Ascending aorta (tissue), 2 donors: ENCODE measurements at regions of chr1 and their contacts with region 1.

Region 1: DNA sequence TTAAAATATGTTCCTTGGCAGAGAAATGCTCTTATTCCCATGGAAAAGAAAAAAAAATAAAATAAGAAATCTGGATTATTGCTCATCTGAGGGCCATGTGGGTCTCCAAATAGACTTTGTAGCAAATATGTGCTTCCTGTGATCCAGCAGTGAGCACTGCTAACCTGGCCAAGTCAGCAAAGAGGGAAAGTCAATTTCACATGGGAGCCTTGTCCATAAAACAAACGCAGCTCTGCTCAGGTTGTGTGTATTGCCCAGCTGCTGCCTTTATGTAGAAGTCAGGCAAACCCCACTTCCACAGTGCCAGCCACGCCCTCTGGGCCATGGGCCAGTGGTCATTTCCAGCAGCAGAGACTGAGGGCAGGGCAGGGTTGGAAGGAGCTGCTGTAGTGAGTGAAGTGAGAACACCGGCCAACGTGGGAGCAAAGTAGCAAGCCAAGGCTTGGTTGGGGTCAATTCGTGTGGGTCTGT is 174.3 kb downstream of the LYPLAL1 start:
- DNase-seq: peak in 1 of 2 donors; percentile 70
- H3K4me3 ChIP-seq: no peak overlapping the region
- H3K27ac ChIP-seq: peak overlapping the region; percentile 49 to 64
- H3K4me1 ChIP-seq: peaks cover 0 to 12% of the 10 kb centered on the region in 2 donors
- H3K27me3 ChIP-seq: no peaks in the 10 kb centered on the region
- CTCF ChIP-seq: no peak

Region 2: DNA sequence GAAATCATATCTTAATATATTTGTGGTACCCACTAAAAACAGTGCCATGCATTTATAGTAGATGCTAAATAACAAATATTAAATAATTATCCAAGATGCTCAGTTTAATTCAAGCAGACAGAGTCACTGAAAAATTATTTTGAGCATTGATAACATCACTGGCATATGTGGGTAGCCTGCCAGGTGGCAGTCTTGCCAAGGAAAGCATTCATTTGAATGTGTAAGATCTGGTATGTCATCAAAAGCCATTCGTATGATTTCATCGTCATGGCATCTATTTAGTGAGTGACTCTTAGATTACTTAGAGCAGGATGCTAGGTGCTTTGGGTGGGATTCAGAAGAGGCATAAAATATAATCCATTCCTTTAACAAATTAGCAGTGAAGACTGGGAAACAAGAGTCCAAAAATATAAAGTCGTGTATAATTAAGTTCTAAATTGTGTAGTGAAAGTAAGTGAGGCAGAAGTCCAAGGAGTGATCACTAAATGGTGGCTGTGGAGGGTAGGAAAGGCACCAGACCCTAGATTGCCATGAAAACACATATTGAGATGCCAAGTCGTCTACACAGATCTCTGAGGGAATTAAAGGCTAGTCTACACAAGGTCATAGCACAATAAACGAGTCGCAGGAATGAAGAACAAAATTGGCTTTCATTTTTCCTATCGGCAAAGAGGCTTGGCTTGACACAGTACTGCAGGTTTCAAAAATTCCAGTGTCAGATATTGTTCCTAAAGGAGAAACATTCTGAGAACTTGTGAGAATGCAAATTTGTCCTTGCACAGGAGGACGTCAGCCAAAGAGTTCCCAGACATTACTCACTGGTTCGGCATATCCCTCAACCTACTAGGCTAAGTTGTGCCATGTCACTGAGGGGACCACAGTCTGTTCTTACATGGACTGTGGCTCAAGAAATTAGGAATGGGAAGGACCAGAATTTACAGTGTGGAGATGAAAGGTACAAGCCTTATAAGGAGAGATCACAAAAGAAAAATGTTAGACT is 43.4 kb before region 1 on chr1:
- intact Hi-C with region 1: loop called (anchors 5 kb)
- DNase-seq: peak in 1 of 2 donors; percentile 89
- H3K4me3 ChIP-seq: peak overlapping the region; percentile 18 to 51
- H3K27ac ChIP-seq: peak overlapping the region; percentile 82 to 85
- H3K4me1 ChIP-seq: peaks cover 4 to 9% of the 10 kb centered on the region in 2 donors
- H3K27me3 ChIP-seq: no peaks in the 10 kb centered on the region
- CTCF ChIP-seq: no peak